Ovary (tissue), 10 donors: ENCODE measurements at regions of chr3 and their contacts with region 1.

Region 1: DNA sequence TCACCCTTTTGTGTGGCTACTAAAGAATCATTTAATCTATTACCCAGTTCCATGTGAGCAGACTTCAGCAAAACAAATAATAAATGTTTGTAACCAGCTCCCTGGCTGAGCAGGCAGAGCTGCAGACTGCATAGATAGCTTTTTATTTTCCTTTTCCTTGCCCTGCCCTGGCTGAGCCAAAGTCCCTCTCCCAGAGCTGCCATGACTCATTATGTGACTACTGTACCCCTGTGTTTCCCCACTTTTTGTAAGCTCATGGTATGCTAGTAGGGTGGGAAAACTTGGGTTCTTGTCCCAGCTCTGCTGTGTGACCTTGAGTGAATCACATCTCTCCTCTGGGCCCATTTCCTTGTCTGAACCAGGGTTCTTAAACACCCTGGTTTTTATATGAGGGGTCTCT is 127.5 kb downstream of the CLSTN2 start:
- DNase-seq: no peak
- H3K4me3 ChIP-seq: no peak overlapping the region
- H3K27ac ChIP-seq: no peak overlapping the region
- H3K4me1 ChIP-seq: no peaks in the 10 kb centered on the region
- H3K27me3 ChIP-seq: no peaks in the 10 kb centered on the region
- CTCF ChIP-seq: no peak
- EP300 ChIP-seq: no peak
- POLR2A ChIP-seq: no peak

Region 2: GRCh38 chr3:139758654-139759291 is 303.7 kb before region 1 on chr3:
- intact Hi-C with region 1: no loop called
- DNase-seq: no peak
- H3K4me3 ChIP-seq: no peak overlapping the region
- H3K27ac ChIP-seq: no peak overlapping the region
- H3K4me1 ChIP-seq: no peaks in the 10 kb centered on the region
- H3K27me3 ChIP-seq: no peaks in the 10 kb centered on the region
- CTCF ChIP-seq: no peak
- EP300 ChIP-seq: no peak
- POLR2A ChIP-seq: no peak

Region 3: GRCh38 chr3:139893267-139893962 is 169.0 kb before region 1 on chr3:
- intact Hi-C with region 1: no loop called
- DNase-seq: peak; percentile 27 to 77 (median 42)
- H3K4me3 ChIP-seq: no peak overlapping the region
- H3K27ac ChIP-seq: peak overlapping the region; percentile 60 to 84
- H3K4me1 ChIP-seq: peaks cover 18% of the 10 kb centered on the region
- H3K27me3 ChIP-seq: no peaks in the 10 kb centered on the region
- CTCF ChIP-seq: no peak
- EP300 ChIP-seq: no peak
- POLR2A ChIP-seq: no peak

Region 4: GRCh38 chr3:139994891-139995290 is 67.6 kb before region 1 on chr3:
- intact Hi-C with region 1: no loop called
- DNase-seq: no peak
- H3K4me3 ChIP-seq: no peak overlapping the region
- H3K27ac ChIP-seq: no peak overlapping the region
- H3K4me1 ChIP-seq: no peaks in the 10 kb centered on the region
- H3K27me3 ChIP-seq: no peaks in the 10 kb centered on the region
- CTCF ChIP-seq: no peak
- EP300 ChIP-seq: no peak
- POLR2A ChIP-seq: no peak

Region 5: DNA sequence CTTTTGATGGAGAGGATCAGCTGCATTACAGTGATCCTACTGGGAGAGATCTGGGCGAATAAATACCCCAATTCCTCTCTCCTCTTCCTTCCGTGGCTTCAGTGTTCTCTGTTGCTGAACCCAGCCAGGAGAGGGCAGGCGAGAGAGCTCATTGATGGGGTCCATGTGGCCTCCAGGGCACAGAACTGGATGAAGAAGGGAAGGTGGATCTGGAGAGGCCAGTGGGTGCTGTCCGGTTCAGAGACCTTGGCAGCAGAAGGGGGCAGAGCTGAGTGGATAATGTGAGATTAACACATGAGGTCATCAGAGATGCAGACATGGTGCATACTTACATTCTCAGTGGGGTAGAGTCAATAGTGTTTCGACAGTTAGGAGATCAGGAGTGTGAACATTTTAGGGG is 66.2 kb after region 1 on chr3:
- intact Hi-C with region 1: loop called in 1 of 4 experiments (anchors 2 kb)
- DNase-seq: no peak
- H3K4me3 ChIP-seq: no peak overlapping the region
- H3K27ac ChIP-seq: no peak overlapping the region
- H3K4me1 ChIP-seq: no peaks in the 10 kb centered on the region
- H3K27me3 ChIP-seq: no peaks in the 10 kb centered on the region
- CTCF ChIP-seq: no peak
- EP300 ChIP-seq: no peak
- POLR2A ChIP-seq: no peak

Region 6: DNA sequence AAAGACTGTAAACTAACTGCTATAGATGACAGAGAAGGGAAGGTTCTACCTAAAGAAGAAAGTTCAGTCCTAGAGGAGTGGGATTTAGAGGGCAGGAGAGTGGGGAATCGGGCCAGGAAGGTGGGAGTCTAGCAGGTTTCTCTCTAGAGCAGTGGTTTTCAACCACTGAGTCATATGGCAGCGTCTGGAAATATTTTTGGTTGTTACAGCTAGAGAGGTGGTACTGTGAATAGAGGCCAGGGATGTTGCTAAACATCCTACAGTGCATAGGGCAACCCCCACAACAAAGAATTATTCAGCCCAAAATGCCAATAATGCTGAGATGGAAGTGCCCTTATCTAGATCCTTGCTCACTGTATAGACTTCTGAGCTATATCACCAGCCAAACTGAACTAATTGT is 1842.7 kb after region 1 on chr3:
- intact Hi-C with region 1: no loop called
- DNase-seq: no peak
- H3K4me3 ChIP-seq: no peak overlapping the region
- H3K27ac ChIP-seq: no peak overlapping the region
- H3K4me1 ChIP-seq: no peaks in the 10 kb centered on the region
- H3K27me3 ChIP-seq: no peaks in the 10 kb centered on the region
- CTCF ChIP-seq: no peak
- EP300 ChIP-seq: no peak
- POLR2A ChIP-seq: no peak